ENCODE measurements at regions of chr5 and their contacts with region 1.

Region 1: GRCh38 chr5:75053304-75054133 is 1.2 kb upstream of the GCNT4 start:
- DNase-seq: peak; percentile 65 to 84
- ATAC-seq: peak; percentile 81
- H3K4me3 ChIP-seq: peak overlapping the region; percentile 91 to 95
- H3K27ac ChIP-seq: peak overlapping the region; percentile 88 to 96
- H3K4me1 ChIP-seq: no peaks in the 10 kb centered on the region
- H3K27me3 ChIP-seq: no peaks in the 10 kb centered on the region

Region 2: DNA sequence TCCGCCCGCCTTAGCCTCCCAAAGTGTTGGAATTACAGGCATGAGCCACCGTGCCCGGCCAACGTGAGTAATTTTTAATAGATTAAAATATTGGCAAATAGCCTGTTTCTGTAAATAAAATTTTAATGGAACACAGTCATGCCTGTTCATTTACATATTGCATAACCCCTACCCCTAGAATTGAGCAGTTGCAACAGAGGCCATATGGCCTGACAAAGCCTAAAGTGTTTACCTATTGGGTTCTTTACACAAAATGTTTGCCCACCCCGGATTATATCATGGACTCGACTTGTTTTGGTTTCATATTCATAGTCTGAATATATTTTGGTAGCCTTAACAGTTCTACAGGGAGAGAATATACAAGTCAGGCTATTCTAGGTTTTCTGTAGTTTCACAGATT is 281.2 kb before region 1 on chr5:
- intact Hi-C with region 1: loop called in 1 of 2 experiments (anchors 10 kb)
- DNase-seq: no peak
- ATAC-seq: no peak
- H3K4me3 ChIP-seq: no peak overlapping the region
- H3K27ac ChIP-seq: no peak overlapping the region
- H3K4me1 ChIP-seq: no peaks in the 10 kb centered on the region
- H3K27me3 ChIP-seq: no peaks in the 10 kb centered on the region

Region 3: DNA sequence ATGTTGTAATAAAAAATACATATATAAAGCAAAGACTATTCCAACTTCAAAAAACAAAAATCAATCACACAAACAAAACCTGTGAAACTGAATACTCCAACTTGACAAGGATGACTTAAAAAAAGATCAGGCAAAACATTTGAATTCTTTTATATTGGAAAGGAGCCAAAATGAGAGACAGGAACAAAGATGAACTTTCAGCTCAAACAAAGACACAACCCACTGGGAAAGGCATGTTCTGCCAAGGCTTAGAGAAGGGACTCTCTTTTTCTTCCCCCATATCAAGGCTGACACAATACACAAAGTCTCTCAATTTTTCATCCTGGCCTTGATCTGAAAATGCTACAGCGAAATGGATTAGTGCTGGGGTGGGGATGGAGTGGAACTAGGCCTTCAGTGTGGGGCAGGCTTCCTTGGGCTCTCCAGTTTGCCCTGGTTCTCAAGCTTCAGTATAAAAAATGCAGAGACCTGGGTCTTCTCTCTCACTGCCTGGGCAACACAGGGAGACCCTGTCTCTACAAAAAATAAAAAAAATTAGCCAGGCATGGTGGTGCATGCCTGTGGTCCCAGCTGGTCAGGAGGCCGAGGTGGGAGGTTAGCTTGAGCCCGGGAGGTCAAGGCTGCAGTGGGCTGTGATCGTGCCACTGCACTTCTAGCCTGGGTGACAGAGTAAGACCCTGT is 175.8 kb before region 1 on chr5:
- intact Hi-C with region 1: no loop called
- DNase-seq: no peak
- ATAC-seq: no peak
- H3K4me3 ChIP-seq: no peak overlapping the region
- H3K27ac ChIP-seq: no peak overlapping the region
- H3K4me1 ChIP-seq: no peaks in the 10 kb centered on the region
- H3K27me3 ChIP-seq: peaks cover 0 to 1% of the 10 kb centered on the region in 2 donors

Region 4: DNA sequence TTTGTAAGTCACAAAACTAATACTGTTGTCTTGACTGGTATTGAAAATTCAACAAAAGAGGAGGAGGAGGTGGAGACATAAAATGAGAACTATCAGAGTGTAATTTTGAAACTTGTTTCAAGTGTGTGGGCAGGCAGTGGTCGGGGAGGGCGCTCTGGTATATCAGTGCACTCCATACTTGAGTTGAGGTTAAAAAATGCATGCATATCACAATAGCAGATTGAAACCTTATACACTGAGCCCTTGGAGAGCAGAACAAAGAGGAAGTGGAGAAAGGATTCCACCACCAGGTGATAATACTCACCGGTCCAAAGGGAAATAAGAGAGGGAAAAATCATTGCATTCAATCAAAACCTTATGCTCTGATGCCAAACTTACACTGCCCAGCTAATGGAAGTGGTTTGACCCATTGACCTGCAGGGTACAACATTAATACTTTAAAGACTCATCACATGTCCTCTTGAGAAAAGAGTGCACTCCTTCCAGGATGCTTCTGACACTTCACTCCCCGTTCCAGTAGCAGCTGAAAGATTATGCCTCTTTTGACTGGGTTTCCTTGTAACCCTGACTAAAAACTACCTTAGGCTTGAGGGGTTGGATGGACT is 107.9 kb before region 1 on chr5:
- intact Hi-C with region 1: loop called (anchors 2 to 5 kb)
- DNase-seq: no peak
- ATAC-seq: no peak
- H3K4me3 ChIP-seq: no peak overlapping the region
- H3K27ac ChIP-seq: no peak overlapping the region
- H3K4me1 ChIP-seq: peaks cover 0 to 3% of the 10 kb centered on the region in 2 donors
- H3K27me3 ChIP-seq: no peaks in the 10 kb centered on the region

Region 5: DNA sequence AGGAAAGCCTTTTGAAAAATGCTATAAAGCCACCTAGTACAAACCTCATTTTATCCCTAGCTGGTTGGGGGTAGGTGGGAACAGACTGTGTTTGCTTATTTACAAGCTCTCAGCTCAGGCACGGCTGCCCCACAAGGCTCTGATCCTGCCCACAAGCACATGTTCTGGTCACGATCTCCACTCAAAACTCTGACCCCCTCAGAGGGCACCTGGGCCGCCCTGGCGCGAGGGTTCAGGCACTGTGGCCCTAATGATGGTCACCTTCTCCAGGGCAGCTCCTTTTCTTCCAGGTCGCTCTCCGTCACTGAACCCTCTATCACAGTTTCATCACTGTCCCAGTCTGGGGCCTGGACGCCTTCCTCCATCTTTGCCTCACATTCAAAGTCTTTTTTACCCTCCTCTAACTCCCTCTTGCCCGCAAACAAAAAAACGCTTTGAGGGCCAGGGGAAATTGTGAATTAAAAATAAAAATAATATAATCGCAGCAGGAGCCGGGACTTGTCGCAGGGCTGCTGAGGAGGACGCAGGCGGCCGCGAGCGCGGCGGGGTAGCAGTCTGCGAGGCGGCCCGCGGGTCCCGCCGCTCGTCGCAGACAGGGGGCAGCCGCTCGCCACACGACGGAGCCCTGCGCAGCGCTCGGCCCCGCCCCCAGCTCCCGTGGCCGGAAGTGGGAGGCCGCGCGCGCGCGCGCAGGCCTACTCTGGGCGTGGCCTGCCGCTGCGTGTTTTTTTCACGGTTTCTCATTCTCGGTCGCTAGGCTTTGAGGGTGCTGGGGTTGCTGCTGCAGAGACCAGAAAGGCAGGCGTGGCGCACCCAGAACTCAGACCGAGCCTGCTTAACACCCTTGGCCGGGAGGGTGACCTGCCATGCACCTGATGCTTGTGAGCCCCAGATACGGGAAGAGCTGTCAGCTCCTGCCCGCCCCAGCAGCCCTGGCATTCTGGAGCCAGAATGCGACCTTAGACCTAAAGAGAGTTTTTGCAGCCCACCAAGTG is 183.1 kb after region 1 on chr5 and contains the start of gene ANKRD31:
- intact Hi-C with region 1: loop called (anchors 2 to 10 kb)
- DNase-seq: peak; percentile 91 to 95
- ATAC-seq: peak; percentile 100
- H3K4me3 ChIP-seq: peak within 1 kb of the TSS; percentile 50 to 98
- H3K27ac ChIP-seq: peak within 1 kb of the TSS in 1 of 2 donors; percentile 82
- H3K4me1 ChIP-seq: no peaks in the 10 kb centered on the region
- H3K27me3 ChIP-seq: no peaks in the 10 kb centered on the region
- total RNA-seq, gene ANKRD31: 0.16 to 0.24 TPM

Region 6: DNA sequence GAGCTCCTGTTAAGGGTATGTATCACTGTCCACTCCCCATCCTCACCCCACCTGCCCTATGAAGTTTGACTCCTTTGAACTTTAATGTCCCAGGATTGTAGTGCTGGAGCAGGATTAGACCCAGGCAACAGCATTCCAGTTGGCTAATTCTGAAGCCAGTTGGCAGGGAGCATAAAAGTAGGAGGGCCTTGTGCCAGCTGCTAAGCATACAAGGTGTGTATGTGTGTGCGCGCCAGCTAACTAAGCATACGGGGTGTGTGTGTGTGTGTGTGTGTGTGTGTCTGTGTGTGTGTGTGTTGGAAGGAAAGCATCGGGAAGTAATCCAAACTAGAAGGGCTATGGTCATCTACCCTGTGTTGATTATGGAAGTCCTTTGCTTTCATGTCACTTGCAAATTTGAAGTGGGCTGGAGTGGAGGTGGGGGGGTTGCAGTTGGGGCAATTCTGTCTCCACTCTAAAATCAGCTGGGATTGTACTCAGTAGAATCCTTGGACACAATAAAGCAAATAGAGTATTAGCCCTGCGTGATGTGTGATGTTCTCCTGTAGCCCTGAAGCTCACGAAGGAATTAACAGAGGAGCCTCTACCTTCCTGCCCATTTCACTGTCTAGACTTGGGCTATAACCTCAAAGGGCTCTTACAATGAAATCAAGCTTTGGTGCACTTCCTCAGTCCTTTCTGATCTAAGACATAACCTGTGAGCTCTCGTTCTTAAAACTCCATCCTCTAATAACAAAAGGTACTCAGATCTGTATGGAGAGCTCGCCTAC is 310.4 kb after region 1 on chr5:
- intact Hi-C with region 1: no loop called
- DNase-seq: no peak
- ATAC-seq: peak; percentile 25
- H3K4me3 ChIP-seq: no peak overlapping the region
- H3K27ac ChIP-seq: no peak overlapping the region
- H3K4me1 ChIP-seq: no peaks in the 10 kb centered on the region
- H3K27me3 ChIP-seq: no peaks in the 10 kb centered on the region